ENCODE measurements at regions of chr5 and their contacts with region 1.

Region 1: GRCh38 chr5:72307968-72308852 is 11.8 kb downstream of the MRPS27 start:
- DNase-seq: peak; percentile 99
- H3K4me3 Mint-ChIP-seq: peak overlapping the region; percentile 89
- H3K27ac Mint-ChIP-seq: peak overlapping the region; percentile 93
- H3K4me1 Mint-ChIP-seq: peaks cover 22% of the 10 kb centered on the region
- H3K27me3 Mint-ChIP-seq: no peaks in the 10 kb centered on the region

Region 2: DNA sequence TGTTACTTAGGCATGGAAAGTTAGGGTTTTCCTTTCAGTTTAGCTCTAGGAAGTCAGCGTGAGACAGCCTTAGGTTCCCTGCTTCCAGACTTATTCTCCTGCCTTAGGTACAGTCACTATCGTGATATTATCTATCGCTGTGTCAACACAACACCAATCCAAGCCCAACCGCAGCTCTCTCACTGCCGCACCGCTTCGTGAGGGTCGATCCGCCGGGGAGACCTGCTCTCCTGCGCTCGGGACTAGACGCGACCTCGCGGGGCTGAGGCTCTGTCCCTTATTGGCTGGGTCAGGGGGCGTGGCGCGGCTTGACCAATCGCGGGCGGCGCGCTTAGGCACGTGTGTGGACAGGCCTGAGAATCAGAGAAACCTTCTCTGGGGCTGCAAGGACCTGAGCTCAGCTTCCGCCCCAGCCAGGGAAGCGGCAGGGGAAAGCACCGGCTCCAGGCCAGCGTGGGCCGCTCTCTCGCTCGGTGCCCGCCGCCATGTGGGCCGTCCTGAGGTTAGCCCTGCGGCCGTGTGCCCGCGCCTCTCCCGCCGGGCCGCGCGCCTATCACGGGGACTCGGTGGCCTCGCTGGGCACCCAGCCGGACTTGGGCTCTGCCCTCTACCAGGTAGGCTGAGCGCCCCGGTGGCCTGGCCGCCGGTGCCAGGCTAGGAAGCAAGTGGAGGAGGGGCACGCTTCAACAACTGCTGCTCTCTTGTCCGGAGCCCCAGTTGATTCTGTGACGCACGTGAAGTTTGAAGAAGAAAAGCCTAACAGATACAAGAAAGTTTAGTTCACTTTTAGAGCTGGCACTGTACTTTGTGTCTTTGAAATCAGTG is 721.1 kb before region 1 on chr5 and contains the start of gene MCCC2:
- intact Hi-C with region 1: loop called (anchors 10 kb)
- DNase-seq: peak; percentile 99
- H3K4me3 Mint-ChIP-seq: peak within 1 kb of the TSS; percentile 89
- H3K27ac Mint-ChIP-seq: peak within 1 kb of the TSS; percentile 99
- H3K4me1 Mint-ChIP-seq: peaks cover 31% of the 10 kb centered on the region
- H3K27me3 Mint-ChIP-seq: no peaks in the 10 kb centered on the region
- total RNA-seq, gene MCCC2: 58.7 and 58.9 TPM in 2 replicates

Region 3: GRCh38 chr5:72138943-72139521 is 169.2 kb before region 1 on chr5:
- intact Hi-C with region 1: loop called (anchors 1 kb)
- DNase-seq: peak; percentile 56
- H3K4me3 Mint-ChIP-seq: no peak overlapping the region
- H3K27ac Mint-ChIP-seq: no peak overlapping the region
- H3K4me1 Mint-ChIP-seq: peaks cover 8% of the 10 kb centered on the region
- H3K27me3 Mint-ChIP-seq: peaks cover 53% of the 10 kb centered on the region

Region 4: DNA sequence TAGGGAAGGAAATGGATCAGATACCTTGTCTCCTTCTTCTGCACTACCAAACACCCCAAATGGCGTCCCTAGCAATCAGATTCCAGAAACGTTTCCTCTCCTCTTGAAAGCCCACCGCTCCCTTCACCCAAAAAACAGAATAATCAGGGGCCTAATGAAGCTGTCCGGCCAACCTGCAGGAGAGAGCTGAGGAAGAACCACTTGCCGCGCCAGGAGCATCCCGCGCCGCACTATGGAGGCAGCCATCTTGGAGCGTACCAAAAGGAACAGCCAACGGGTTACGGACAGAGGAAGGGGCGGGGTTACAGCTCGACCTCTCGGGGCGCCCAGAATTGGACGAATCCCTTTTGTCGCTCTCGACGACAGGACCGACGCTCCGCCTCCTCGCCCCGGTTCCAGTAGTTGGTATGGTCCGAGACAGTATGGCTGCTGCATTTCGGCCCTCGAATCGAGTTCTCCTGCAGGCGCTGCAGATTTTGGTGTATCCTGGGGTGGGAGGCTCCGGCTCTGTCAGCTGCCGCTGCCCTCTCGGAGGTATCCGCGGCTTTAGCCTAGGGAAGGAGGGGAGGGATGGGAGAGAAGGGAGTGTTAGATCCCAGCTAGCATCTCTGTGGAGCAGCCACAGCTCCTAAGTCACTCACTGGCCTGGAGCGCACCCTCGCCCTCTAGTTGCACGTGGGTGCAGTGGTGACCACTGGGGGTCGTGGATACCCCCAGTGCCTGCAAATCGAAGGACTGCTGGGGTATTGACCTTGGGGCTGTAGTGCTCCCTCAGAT is 12.0 kb after region 1 on chr5 and contains the starts of genes MRPS27 and PTCD2:
- intact Hi-C with region 1: loop called (anchors 1 kb)
- DNase-seq: peak; percentile 98
- H3K4me3 Mint-ChIP-seq: peak within 1 kb of the TSS; percentile 100
- H3K27ac Mint-ChIP-seq: peak within 1 kb of the TSS; percentile 96
- H3K4me1 Mint-ChIP-seq: peaks cover 32% of the 10 kb centered on the region
- H3K27me3 Mint-ChIP-seq: no peaks in the 10 kb centered on the region
- total RNA-seq, gene MRPS27: 96.5 and 98.7 TPM in 2 replicates
- total RNA-seq, gene PTCD2: 13.6 and 15.1 TPM in 2 replicates

Region 5: GRCh38 chr5:72847989-72848473 is 539.8 kb after region 1 on chr5:
- intact Hi-C with region 1: loop called (anchors 1 kb)
- DNase-seq: peak; percentile 95
- H3K4me3 Mint-ChIP-seq: peak overlapping the region; percentile 99
- H3K27ac Mint-ChIP-seq: peak overlapping the region; percentile 99
- H3K4me1 Mint-ChIP-seq: peaks cover 29% of the 10 kb centered on the region
- H3K27me3 Mint-ChIP-seq: peaks cover 18% of the 10 kb centered on the region

Region 6: GRCh38 chr5:73565139-73565968 is 1257.1 kb after region 1 on chr5 and contains the starts of genes ANKRA2 and UTP15:
- intact Hi-C with region 1: loop called (anchors 5 kb)
- DNase-seq: peak; percentile 100
- H3K4me3 Mint-ChIP-seq: peak within 1 kb of the TSS; percentile 100
- H3K27ac Mint-ChIP-seq: peak within 1 kb of the TSS; percentile 100
- H3K4me1 Mint-ChIP-seq: peaks cover 33% of the 10 kb centered on the region
- H3K27me3 Mint-ChIP-seq: peaks cover 2% of the 10 kb centered on the region
- total RNA-seq, gene ANKRA2: 18.5 and 19.7 TPM in 2 replicates
- total RNA-seq, gene UTP15: 59.3 and 61.5 TPM in 2 replicates

Measured in activated CD4-positive, alpha-beta T cell treated with anti-CD3 and anti-CD28 coated beads, Interleukin-2, amount 10 ng/mL, durations not matched to agents 24 days and 14 days (primary cell).